Spleen (tissue), 13 donors: ENCODE measurements at regions of chr5 and their contacts with region 1.

Region 1: DNA sequence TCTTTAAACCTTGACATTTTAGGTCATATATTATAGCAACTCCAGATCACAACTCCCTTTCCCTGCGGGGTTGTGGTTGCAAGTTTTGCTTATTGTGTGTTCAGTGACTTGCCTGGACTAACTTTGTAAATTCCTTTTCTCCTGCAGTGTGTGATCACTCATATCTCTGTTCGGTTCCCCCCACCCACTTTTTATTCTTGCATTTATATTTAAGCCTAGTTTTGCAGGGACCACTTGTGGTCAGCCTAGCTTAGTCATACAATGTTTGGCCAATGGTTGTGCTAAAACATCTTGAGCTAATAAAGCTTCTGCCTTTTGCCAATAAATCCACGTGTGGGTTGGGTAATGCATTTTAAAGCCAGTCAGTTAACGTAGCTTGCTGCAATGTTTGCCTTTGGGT is 146.5 kb upstream of the IRX4 start:
- DNase-seq: no peak
- H3K4me3 ChIP-seq: no peak overlapping the region
- H3K27ac ChIP-seq: no peak overlapping the region
- H3K4me1 ChIP-seq: no peaks in the 10 kb centered on the region
- H3K27me3 ChIP-seq: peaks cover 0 to 47% (median 0%) of the 10 kb centered on the region in 7 donors
- CTCF ChIP-seq: no peak
- POLR2A ChIP-seq: no peak

Region 2: DNA sequence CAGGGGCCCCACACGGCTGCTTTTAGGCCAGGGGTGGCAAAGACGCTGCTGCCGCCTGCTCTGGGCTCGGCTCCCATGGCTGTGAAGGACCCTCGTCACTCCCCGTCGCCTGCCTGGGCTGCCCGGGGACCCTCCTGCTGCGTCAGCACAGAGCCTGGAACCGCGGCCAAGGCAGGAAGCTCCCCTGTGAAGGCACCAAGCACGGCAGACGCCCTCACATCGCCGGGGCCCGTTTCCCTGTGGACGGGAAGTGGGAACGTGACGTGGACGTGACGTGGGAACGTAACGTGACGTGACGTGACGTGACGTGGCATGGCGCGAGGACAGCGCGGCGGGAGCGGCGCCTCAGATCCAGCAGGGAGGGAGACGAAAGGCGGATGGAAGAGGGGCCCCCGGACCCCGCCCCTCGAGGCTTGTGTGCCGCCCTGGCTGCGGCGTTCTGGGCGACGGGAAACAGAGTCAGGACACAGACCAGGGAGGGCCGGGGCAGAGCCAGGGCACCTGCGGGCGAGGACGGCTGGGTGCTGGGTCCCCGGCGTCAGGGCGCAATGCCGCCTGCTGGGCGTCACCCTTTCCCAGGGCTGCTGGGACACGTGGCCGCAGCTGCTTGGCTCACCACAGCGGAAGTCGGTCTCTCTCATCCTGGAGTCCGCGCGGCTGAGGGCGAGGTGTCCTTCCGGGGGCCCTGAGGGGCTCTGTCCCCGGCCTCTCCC is 282.7 kb before region 1 on chr5:
- intact Hi-C with region 1: loop called (anchors 10 kb)
- DNase-seq: peak; percentile 72
- H3K4me3 ChIP-seq: no peak overlapping the region
- H3K27ac ChIP-seq: no peak overlapping the region
- H3K4me1 ChIP-seq: no peaks in the 10 kb centered on the region
- H3K27me3 ChIP-seq: peaks cover 0 to 57% (median 0%) of the 10 kb centered on the region in 7 donors
- CTCF ChIP-seq: no peak
- POLR2A ChIP-seq: no peak